ENCODE measurements at regions of chr1 and their contacts with region 1.

Region 1: GRCh38 chr1:156383023-156383422 is 14.0 kb downstream of the RHBG start:
- DNase-seq: peak; percentile 75 to 88
- ATAC-seq: peak; percentile 90 to 95
- H3K4me3 ChIP-seq: no peak overlapping the region
- H3K27ac ChIP-seq: 0 out of 6 replicates have a peak overlapping the region, but pooled peaks of 1 of the 2 experiments have one; percentile 47
- H3K4me1 ChIP-seq: peaks cover 8% of the 10 kb centered on the region
- CTCF ChIP-seq: peak; percentile 76
- EP300 ChIP-seq: no peak
- POLR2A ChIP-seq: no peak
- RAD21 ChIP-seq: peak; percentile 85 to 92

Region 2: GRCh38 chr1:156421062-156421938 is 38.3 kb after region 1 on chr1:
- CTCF ChIA-PET with region 1: interaction called, 487 read pairs
- POLR2A ChIA-PET with region 1: interaction called, 3 read pairs
- DNase-seq: peak; percentile 83 to 98
- ATAC-seq: peak; percentile 94 to 97
- H3K4me3 ChIP-seq: peak overlapping the region; percentile 61
- H3K27ac ChIP-seq: peak overlapping the region; percentile 67 to 83; a peak in 5 of 6 replicates
- H3K4me1 ChIP-seq: peaks cover 12% of the 10 kb centered on the region
- CTCF ChIP-seq: no peak
- EP300 ChIP-seq: no peak
- POLR2A ChIP-seq: peak; percentile 81
- RAD21 ChIP-seq: no peak

Region 3: GRCh38 chr1:156445789-156446263 is 62.8 kb after region 1 on chr1:
- CTCF ChIA-PET with region 1: interaction called, 543 read pairs
- POLR2A ChIA-PET with region 1: interaction called, 7 read pairs
- DNase-seq: peak; percentile 87 to 90
- ATAC-seq: peak; percentile 92 to 95
- H3K4me3 ChIP-seq: no peak overlapping the region
- H3K27ac ChIP-seq: peak overlapping the region; percentile 54 to 71; a peak in 5 of 6 replicates
- H3K4me1 ChIP-seq: 0 out of 3 replicates have a peak, but pooled peaks cover 3% of the 10 kb centered on the region
- CTCF ChIP-seq: peak; percentile 92
- EP300 ChIP-seq: no peak
- POLR2A ChIP-seq: no peak
- RAD21 ChIP-seq: peak; percentile 92 to 96

Region 4: DNA sequence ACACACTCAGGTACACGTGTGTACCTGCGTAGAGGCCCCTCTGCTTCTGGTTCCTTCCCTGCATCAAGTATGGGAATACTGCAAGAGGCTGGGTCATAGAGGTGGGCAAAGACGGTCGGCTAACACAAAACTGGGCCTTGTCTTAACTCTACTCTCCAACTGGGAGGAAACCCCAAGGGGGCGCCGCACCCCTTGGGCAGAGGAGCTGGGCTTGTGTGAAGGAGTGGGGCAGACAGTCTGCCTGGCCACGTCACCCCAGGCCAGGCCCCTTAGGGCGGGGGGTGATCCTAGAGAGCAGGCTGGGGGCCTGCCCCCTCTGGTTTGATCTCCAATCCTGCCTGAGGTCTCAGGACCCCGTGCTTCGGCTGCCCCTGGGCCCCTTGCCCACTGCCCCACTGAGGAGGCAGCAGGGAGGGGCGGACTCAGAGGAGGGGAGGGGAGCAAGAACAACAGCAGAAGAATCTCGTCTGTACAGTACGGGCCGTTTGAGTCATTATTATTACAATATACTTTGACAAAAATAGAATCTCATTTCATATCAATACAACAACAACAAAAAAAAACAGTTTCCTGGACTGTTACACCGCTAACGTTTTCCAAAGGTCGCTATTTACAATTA is 82.8 kb after region 1 on chr1:
- CTCF ChIA-PET with region 1: interaction called, 15 read pairs
- POLR2A ChIA-PET with region 1: no interaction called
- DNase-seq: peak in 1 of 2 experiments; percentile 38
- ATAC-seq: peak in 1 of 2 experiments; percentile 50; a peak in 3 of 6 replicates
- H3K4me3 ChIP-seq: no peak overlapping the region
- H3K27ac ChIP-seq: peak overlapping the region; percentile 10 to 43; a peak in 1 of 6 replicates
- H3K4me1 ChIP-seq: peaks cover 51% of the 10 kb centered on the region
- CTCF ChIP-seq: peak; percentile 36
- EP300 ChIP-seq: no peak
- POLR2A ChIP-seq: no peak
- RAD21 ChIP-seq: peak in 1 of 2 experiments; percentile 45; a peak in 2 of 5 replicates

Region 5: GRCh38 chr1:156608036-156608674 is 225.1 kb after region 1 on chr1:
- CTCF ChIA-PET with region 1: interaction called, 32 read pairs
- POLR2A ChIA-PET with region 1: no interaction called
- DNase-seq: peak; percentile 67 to 84
- ATAC-seq: peak; percentile 98 to 99
- H3K4me3 ChIP-seq: no peak overlapping the region
- H3K27ac ChIP-seq: peak overlapping the region; percentile 41 to 70; a peak in 4 of 6 replicates
- H3K4me1 ChIP-seq: peaks cover 8% of the 10 kb centered on the region; the same call in 2 of the 3 replicates
- CTCF ChIP-seq: peak; percentile 83
- EP300 ChIP-seq: no peak
- POLR2A ChIP-seq: no peak
- RAD21 ChIP-seq: peak; percentile 71 to 76

Region 6: DNA sequence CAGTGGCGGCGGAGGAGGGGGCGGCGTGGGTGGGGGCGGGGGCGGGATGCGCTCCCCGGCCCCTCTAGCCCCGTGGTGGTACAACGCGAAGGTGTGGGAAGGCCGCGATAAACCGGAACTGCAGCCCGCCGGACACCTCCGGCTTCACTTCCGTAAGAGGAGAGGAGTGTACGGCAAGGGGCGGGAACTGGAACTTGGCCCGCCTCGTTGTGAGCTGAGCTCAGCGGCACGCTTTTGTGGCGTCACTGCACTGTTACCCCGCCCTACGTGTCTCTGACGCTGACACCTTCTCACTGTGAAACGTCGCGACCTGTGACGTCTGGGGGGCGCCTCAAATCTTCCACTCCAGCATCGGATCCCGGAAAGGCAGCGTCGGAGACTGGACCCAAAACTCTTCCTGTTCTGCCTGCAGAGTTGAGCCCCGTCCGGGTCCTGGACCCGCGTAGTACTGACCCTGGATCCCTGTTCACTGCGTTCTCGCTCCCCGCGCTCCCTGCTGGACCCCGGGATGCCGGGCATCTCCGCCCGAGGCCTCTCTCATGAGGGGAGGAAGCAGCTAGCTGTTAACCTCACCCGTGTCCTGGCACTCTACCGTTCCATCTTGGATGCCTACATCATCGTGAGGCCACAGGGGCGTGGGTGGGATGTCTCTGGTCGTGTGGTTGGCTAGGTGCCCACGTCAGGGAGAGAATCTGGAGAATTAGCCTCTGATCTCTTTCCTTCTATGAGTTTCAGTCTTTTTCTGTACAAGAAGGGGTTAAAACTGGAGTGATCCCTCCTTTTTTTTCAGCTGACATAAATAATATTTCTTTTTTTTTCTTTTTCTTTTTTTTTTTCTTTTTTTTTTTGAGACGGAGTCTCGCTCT is 345.8 kb after region 1 on chr1 and contains the start of gene ISG20L2:
- CTCF ChIA-PET with region 1: no interaction called
- POLR2A ChIA-PET with region 1: no interaction called
- DNase-seq: peak; percentile 94 to 99
- ATAC-seq: peak; percentile 87 to 89
- H3K4me3 ChIP-seq: peak within 1 kb of the TSS; percentile 89
- H3K27ac ChIP-seq: peak within 1 kb of the TSS; percentile 93
- H3K4me1 ChIP-seq: peaks cover 35% of the 10 kb centered on the region
- CTCF ChIP-seq: no peak
- EP300 ChIP-seq: no peak
- POLR2A ChIP-seq: peak; percentile 29
- RAD21 ChIP-seq: no peak
- polyA plus RNA-seq, gene ISG20L2: 42.5 and 55.7 TPM in 2 replicates